IMR-90 (cell line): ENCODE measurements at regions of chr11 and their contacts with region 1.

Region 1: GRCh38 chr11:19566583-19567379 is 145.9 kb upstream of the NAV2 start:
- DNase-seq: no peak
- ATAC-seq: no peak
- H3K4me3 ChIP-seq: no peak overlapping the region
- H3K27ac ChIP-seq: no peak overlapping the region
- H3K4me1 ChIP-seq: no peaks in the 10 kb centered on the region; the same call in 1 of the 2 replicates
- H3K27me3 ChIP-seq: peaks cover 1% of the 10 kb centered on the region
- CTCF ChIP-seq: no peak
- POLR2A ChIP-seq: no peak
- RAD21 ChIP-seq: no peak

Region 2: DNA sequence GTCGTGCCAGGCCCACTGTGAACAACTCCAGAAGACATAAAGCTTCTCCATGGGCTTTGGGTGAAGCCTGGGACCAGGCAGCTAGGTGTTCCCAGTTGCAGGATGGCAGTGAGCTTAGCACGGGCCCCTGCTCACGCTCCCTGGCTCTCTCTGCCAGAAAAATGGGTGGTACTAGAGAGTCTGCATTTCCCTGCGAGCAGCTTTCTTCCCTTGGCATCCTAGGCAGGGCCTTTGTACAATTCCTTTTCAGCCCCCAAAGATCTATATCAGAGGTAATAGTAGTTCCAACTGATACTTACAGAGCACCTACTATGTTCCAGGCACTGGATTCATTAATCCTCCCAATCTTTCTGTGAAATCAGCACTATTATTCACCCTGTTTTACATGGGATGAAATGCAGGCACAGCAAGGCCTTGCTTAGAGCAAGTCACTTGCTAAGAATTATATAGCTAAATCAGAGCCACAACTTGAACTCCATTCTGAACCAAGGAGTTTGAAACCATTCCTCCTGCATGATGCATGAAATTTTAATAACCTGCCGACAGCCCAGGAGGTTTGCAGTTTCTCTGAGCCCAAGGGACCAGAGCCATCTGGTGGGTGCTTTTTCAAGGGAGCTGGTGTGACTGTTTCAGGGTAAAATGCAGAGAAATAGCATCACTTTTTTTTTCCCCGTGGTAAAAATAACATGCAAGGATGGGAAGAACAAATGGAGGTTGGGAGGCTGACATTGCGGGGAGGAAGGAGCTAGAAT is 168.6 kb after region 1 on chr11:
- CTCF ChIA-PET with region 1: interaction called, 18 read pairs
- POLR2A ChIA-PET with region 1: interaction called, 6 read pairs
- dilution Hi-C with region 1: no loop called
- in situ Hi-C with region 1: loop called (anchors 5 kb)
- intact Hi-C with region 1: no loop called
- DNase-seq: peak; percentile 75
- ATAC-seq: peak; percentile 27
- H3K4me3 ChIP-seq: no peak overlapping the region
- H3K27ac ChIP-seq: no peak overlapping the region
- H3K4me1 ChIP-seq: no peaks in the 10 kb centered on the region
- H3K27me3 ChIP-seq: no peaks in the 10 kb centered on the region
- CTCF ChIP-seq: peak; percentile 49
- POLR2A ChIP-seq: no peak
- RAD21 ChIP-seq: peak; percentile 67